ENCODE measurements at regions of chr3 and their contacts with region 1.

Region 1: DNA sequence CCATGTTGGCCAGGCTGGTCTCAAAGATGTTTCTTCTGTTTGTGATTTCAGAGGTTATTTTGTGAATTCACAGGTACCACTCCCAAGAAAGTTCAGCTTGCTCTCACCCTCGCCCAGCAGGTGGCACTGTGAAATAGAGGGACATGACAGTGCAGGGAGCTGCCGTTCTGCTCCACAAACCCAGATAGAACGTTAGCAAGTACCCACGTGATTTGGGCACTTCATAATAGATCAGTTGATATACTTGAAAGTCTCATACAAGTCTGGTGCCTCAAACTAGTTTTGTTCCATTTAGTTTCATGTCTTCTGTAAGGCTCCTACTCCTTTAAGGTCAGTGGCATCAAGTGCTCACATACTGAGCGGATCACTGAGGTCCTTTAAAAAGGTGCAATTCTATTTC is 45.5 kb downstream of the FILIP1L start:
- DNase-seq: peak; percentile 84
- H3K4me3 Mint-ChIP-seq: no peak overlapping the region
- H3K27ac Mint-ChIP-seq: no peak overlapping the region
- H3K4me1 Mint-ChIP-seq: peaks cover 26% of the 10 kb centered on the region
- H3K27me3 Mint-ChIP-seq: no peaks in the 10 kb centered on the region

Region 2: GRCh38 chr3:99678023-99678422 is 390.8 kb before region 1 on chr3:
- CTCF ChIA-PET with region 1: no interaction called
- POLR2A ChIA-PET with region 1: no interaction called
- intact Hi-C with region 1: no loop called
- DNase-seq: no peak
- H3K4me3 Mint-ChIP-seq: no peak overlapping the region
- H3K27ac Mint-ChIP-seq: no peak overlapping the region
- H3K4me1 Mint-ChIP-seq: no peaks in the 10 kb centered on the region
- H3K27me3 Mint-ChIP-seq: peaks cover 6% of the 10 kb centered on the region

Region 3: DNA sequence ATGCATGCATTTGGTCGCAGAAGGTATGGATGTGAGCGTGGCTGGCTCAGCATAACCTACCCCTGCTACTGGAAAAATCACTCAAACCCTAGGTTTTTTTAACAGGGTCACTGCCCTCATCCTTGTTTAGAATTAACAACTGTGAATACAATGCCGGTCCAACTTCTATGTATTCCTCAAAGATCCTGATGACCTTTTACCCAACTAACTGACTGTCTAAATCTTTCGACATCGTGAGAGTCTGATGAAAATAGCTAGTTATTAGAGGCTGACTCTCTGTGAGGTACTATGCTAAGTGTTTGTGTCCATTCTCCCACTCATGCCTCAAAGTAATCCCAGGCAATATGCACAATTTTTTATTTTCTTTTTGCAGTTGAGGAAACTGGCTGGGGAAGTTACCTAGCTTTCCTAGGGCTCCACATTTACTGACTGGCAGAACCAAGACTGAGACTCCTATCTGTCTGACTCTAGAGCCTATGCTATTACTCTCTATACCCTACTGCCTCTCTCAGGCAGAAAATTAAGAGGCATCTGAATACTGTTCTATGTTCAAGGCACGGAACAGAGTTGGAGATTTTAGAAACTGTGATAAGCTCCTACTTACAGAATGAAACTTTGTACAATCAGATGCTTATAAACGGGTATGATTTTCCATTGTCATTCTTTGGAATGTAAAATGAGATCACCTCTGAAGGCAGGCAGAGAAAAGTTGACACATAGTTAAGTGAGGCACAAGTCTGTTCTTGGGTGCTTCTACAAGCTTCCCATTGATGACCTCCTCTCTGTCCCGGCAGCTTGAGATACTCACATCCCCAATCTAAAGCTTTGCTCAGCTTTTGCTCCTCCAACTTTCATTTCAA is 10.9 kb before region 1 on chr3:
- CTCF ChIA-PET with region 1: interaction called, 10 read pairs
- POLR2A ChIA-PET with region 1: no interaction called
- intact Hi-C with region 1: no loop called
- DNase-seq: no peak
- H3K4me3 Mint-ChIP-seq: no peak overlapping the region
- H3K27ac Mint-ChIP-seq: no peak overlapping the region
- H3K4me1 Mint-ChIP-seq: peaks cover 2% of the 10 kb centered on the region
- H3K27me3 Mint-ChIP-seq: no peaks in the 10 kb centered on the region

Region 4: GRCh38 chr3:100089812-100090668 is 21.2 kb after region 1 on chr3:
- CTCF ChIA-PET with region 1: interaction called, 24 read pairs
- POLR2A ChIA-PET with region 1: no interaction called
- intact Hi-C with region 1: loop called (anchors 2 kb)
- DNase-seq: peak; percentile 45
- H3K4me3 Mint-ChIP-seq: no peak overlapping the region
- H3K27ac Mint-ChIP-seq: no peak overlapping the region
- H3K4me1 Mint-ChIP-seq: peaks cover 20% of the 10 kb centered on the region
- H3K27me3 Mint-ChIP-seq: no peaks in the 10 kb centered on the region

Region 5: DNA sequence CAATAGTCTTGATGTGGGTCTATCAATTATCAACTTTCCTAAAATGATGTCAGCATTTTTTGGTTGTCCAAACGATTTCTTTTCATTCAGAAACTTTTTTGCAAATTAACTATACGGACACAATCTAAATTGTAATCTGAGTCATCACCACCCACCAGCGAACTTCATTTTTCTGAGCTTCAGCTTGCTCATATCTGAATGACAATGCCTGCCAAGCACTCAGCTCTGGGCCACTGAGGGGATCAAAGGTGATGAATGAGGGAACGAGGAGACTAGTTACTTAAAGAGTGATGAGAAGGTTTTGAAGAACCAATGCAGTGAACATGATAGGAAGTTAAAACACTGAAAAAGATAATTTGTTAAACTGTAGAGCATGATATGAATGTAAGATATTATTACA is 177.1 kb after region 1 on chr3:
- CTCF ChIA-PET with region 1: interaction called, 14 read pairs
- POLR2A ChIA-PET with region 1: no interaction called
- intact Hi-C with region 1: no loop called
- DNase-seq: peak; percentile 58
- H3K4me3 Mint-ChIP-seq: no peak overlapping the region
- H3K27ac Mint-ChIP-seq: no peak overlapping the region
- H3K4me1 Mint-ChIP-seq: peaks cover 16% of the 10 kb centered on the region
- H3K27me3 Mint-ChIP-seq: no peaks in the 10 kb centered on the region

Region 6: GRCh38 chr3:100254168-100254777 is 185.4 kb after region 1 on chr3:
- CTCF ChIA-PET with region 1: interaction called, 98 read pairs
- POLR2A ChIA-PET with region 1: no interaction called
- intact Hi-C with region 1: loop called (anchors 1 kb)
- DNase-seq: peak; percentile 51
- H3K4me3 Mint-ChIP-seq: no peak overlapping the region
- H3K27ac Mint-ChIP-seq: no peak overlapping the region
- H3K4me1 Mint-ChIP-seq: peaks cover 8% of the 10 kb centered on the region
- H3K27me3 Mint-ChIP-seq: no peaks in the 10 kb centered on the region

Region 7: DNA sequence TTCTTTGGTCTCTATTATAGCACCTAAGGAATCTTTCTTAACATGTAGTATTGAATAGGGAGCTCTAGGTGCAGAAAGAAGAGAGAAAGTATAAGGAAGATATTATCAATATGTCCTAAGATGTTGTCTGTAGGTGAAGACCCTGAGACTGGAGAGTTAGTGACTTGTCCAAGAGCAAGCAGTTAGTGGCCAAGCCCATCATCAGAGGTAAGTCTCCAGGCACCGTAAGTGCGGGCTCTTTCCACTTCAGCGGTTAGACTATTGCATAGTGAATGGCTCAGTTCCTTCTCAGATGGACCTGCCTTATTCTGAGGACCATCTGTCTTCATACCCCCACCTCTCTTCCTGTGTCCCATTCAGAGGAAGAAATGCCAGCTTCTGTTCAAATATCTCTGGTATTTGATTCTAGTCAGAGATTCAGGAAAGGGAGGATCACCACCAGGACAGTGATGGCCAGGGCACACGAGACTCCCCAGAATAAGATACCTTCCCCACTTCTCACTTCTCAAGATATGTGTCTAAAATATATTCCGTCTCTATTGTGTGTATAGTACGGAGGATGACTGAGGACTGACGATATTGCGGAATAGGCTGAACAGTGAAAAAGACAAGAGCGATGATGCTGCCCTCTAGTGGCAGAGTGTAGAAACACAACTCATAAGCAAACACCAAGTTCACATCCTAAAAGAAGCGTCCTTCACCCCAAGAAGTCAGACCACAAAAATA is 521.5 kb after region 1 on chr3:
- CTCF ChIA-PET with region 1: no interaction called
- POLR2A ChIA-PET with region 1: no interaction called
- intact Hi-C with region 1: loop called (anchors 2 kb)
- DNase-seq: peak; percentile 66
- H3K4me3 Mint-ChIP-seq: no peak overlapping the region
- H3K27ac Mint-ChIP-seq: no peak overlapping the region
- H3K4me1 Mint-ChIP-seq: peaks cover 6% of the 10 kb centered on the region
- H3K27me3 Mint-ChIP-seq: peaks cover 4% of the 10 kb centered on the region